ENCODE measurements at regions of chr14 and their contacts with region 1.

Region 1: DNA sequence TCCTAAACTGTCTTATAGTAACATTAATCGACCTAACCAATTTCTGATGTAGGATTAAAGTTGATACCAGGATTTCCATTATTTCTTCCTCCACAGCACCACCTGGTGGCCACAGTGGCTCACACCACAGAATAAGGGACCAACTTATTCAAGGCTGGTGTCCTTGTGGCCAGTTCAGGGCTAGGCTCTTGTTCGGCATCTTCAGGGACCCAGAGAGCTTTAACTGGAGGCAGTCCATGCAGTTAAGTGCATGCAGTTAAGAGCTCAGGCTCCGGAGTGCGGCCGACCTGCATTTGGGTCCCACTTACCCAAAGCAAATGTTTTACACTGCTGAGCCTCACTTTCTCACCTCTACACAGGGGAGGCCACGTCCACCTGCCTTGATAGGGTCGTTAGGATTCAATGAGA is 42.0 kb upstream of the GPR68 start:
- DNase-seq: peak; percentile 89
- ATAC-seq: peak; percentile 84
- H3K4me3 Mint-ChIP-seq: no peak overlapping the region
- H3K27ac Mint-ChIP-seq: peak overlapping the region; percentile 78
- H3K4me1 Mint-ChIP-seq: peaks cover 13% of the 10 kb centered on the region
- H3K27me3 Mint-ChIP-seq: no peaks in the 10 kb centered on the region

Region 2: DNA sequence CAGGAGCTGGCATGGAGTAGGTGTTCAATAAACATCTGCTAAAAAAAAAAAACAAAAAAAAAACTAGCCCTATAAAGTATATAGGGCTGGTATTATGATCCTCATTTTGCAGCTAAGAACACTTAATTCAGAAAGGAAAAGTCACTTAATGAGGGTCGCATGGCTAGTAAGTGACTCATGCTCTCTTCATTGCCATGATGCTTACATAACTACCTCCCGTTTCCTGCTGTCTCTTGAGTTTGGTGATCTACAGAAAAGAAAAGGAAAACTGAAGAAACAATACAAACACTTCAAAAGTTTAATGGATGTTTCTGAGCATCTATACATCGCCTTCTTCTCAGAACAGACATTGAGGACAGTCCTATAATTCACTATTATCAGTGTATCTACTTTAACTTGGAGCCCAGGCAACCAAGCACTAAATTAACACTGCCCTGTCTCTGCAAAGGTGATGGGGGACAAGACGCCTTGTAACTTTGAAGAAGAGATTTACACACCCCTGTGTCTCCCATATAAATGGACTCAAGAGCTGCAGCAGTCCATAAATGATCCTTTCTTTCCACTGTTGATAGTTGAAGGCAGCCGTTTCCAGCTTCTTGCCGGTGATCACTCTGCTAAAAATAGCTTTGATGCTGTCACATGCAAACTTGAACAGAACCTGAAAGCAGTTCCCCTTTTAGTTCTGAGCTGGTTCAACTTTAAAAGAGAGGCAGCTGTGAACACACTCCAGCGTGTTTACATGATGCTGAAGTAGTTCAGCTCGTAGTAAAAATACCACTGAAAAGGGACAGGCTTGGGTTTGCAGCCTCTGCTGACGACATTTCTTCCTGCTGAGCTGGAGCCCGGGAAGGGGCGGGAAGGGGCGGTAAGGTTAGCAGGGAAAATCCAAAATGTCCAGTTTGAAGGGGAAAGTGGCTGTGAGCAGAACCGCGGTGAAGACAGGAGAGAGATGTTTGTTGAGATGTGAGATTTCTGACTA is 1982.8 kb before region 1 on chr14:
- CTCF ChIA-PET with region 1: no interaction called
- POLR2A ChIA-PET with region 1: no interaction called
- intact Hi-C with region 1: no loop called
- DNase-seq: peak; percentile 29
- ATAC-seq: peak; percentile 61
- H3K4me3 Mint-ChIP-seq: peak overlapping the region; percentile 62
- H3K27ac Mint-ChIP-seq: peak overlapping the region; percentile 91
- H3K4me1 Mint-ChIP-seq: peaks cover 62% of the 10 kb centered on the region
- H3K27me3 Mint-ChIP-seq: no peaks in the 10 kb centered on the region

Region 3: GRCh38 chr14:91303091-91303923 is 16.8 kb after region 1 on chr14:
- CTCF ChIA-PET with region 1: interaction called, 16 read pairs
- POLR2A ChIA-PET with region 1: no interaction called
- intact Hi-C with region 1: no loop called
- DNase-seq: peak; percentile 97
- ATAC-seq: peak; percentile 87
- H3K4me3 Mint-ChIP-seq: peak overlapping the region; percentile 66
- H3K27ac Mint-ChIP-seq: peak overlapping the region; percentile 97
- H3K4me1 Mint-ChIP-seq: peaks cover 63% of the 10 kb centered on the region
- H3K27me3 Mint-ChIP-seq: no peaks in the 10 kb centered on the region